ENCODE measurements at regions of chr12 and their contacts with region 1.

Region 1: DNA sequence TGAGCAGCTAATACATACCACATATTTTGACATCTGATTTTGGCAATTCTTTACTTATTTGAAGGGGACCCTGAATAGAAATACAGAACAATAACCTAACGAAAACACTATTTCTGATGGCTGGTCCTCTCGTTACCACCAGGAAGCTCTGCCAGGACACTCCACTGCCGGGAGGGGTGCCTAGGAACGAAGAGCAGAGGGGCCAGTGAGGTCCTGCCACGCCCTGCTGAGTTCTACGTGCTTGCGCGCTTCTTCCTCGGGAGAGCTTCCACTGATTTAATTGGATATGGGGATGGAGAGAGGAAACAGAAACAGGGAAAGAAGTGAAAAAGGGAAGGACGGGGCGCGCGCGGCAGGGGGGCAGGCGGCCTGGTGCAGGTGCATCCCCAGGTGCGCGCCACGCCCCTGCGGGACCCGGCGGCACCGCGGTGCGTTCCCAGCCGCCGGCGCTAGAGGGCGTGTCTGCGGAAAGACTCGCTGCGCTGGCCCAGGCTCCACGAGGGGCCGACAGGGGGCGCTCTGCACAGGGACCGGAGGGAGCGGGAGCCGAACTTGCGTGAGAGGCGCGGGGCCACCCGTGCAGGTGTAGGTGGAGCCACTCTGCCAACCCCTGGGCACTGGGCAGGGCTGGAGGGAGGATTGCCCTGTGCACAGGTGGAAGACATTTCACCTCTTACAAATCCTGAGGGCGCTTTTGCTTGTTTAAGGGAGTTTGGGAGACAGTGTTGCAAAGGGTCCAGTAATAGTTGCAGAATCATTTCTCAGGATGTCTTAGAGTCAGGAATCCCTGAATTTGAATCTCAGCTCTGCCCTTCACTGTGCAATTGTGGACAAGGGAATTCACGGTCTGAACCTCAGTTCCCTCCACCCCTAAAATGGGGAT is 986.3 kb upstream of the TMEM132C start:
- DNase-seq: peak; percentile 80
- H3K4me3 Mint-ChIP-seq: no peak overlapping the region
- H3K27ac Mint-ChIP-seq: no peak overlapping the region
- H3K4me1 Mint-ChIP-seq: peaks cover 2% of the 10 kb centered on the region
- H3K27me3 Mint-ChIP-seq: peaks cover 15% of the 10 kb centered on the region

Region 2: DNA sequence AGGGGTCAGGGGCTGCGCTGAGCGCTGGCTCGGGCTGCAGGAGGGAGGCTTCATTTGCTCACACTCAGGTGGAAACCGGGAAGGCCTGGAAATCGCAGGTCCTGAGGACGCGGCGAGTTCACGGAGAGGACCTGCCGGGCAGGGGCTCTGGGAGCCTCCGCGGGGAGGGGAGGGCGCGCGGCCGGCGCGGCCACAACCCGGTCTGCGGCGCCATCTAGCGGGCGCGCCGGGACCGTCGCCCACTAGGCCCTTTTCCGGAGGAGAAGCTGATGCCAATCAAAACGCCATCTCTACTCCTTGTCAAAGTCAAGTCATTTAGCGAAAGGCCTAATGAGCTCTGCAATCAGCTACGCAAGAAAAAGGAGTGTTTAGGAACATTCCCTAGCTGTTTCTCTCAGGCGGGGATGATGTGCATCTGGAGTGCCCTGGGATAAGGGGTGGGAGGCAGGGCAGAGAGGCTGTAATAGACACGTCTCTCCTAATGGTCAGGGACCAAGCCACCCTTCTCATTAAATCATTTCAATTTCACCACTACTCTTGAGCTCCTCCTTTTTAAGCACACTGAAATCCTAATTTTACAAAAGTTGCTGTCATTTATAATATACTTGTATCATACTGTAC is 100.5 kb after region 1 on chr12:
- CTCF ChIA-PET with region 1: interaction called, 4 read pairs
- POLR2A ChIA-PET with region 1: no interaction called
- intact Hi-C with region 1: loop called (anchors 2 kb)
- DNase-seq: peak; percentile 53
- H3K4me3 Mint-ChIP-seq: no peak overlapping the region
- H3K27ac Mint-ChIP-seq: no peak overlapping the region
- H3K4me1 Mint-ChIP-seq: no peaks in the 10 kb centered on the region
- H3K27me3 Mint-ChIP-seq: peaks cover 3% of the 10 kb centered on the region

Region 3: DNA sequence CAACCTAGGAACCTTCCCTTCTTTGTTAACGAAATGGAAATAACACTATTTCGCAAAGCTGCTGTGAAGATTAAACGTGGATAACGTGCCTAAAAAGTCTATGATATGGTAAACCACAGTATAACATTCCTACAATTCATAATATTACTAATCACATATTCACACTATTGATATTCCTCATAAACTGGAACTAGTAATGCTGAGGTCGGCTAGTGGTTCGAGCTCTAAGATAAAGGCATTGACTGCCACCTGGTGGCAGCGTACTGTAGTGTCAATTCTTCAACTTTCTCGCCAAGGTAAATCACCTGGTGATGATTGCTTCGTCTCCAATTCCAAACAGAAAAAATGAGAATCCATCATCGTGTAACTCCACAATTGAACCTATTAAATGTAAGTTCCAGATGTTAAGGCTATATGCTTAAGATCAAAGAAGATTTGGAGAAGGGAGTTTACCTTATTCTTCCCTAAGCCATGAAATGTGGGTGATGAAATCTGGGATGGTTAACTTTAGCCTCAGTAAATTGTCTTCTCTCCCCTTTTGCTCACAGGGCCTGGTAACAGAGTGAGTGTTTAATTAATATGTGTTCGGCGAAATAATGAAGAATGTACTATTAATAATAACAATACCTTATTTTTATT is 788.8 kb after region 1 on chr12:
- CTCF ChIA-PET with region 1: no interaction called
- POLR2A ChIA-PET with region 1: no interaction called
- intact Hi-C with region 1: loop called (anchors 5 kb)
- DNase-seq: peak; percentile 24
- H3K4me3 Mint-ChIP-seq: no peak overlapping the region
- H3K27ac Mint-ChIP-seq: no peak overlapping the region
- H3K4me1 Mint-ChIP-seq: no peaks in the 10 kb centered on the region
- H3K27me3 Mint-ChIP-seq: no peaks in the 10 kb centered on the region

Measured in activated CD4-positive, alpha-beta memory T cell treated with anti-CD3 and anti-CD28 coated beads for 36 hours (primary cell).